ENCODE measurements at regions of chr6 and their contacts with region 1.

Region 1: GRCh38 chr6:32244946-32245398 is 21.1 kb upstream of the NOTCH4 start:
- DNase-seq: peak; percentile 89

Region 2: GRCh38 chr6:32255199-32256153 is 10.5 kb after region 1 on chr6:
- intact Hi-C with region 1: loop called (anchors 1 kb)
- DNase-seq: peak; percentile 80

Region 3: DNA sequence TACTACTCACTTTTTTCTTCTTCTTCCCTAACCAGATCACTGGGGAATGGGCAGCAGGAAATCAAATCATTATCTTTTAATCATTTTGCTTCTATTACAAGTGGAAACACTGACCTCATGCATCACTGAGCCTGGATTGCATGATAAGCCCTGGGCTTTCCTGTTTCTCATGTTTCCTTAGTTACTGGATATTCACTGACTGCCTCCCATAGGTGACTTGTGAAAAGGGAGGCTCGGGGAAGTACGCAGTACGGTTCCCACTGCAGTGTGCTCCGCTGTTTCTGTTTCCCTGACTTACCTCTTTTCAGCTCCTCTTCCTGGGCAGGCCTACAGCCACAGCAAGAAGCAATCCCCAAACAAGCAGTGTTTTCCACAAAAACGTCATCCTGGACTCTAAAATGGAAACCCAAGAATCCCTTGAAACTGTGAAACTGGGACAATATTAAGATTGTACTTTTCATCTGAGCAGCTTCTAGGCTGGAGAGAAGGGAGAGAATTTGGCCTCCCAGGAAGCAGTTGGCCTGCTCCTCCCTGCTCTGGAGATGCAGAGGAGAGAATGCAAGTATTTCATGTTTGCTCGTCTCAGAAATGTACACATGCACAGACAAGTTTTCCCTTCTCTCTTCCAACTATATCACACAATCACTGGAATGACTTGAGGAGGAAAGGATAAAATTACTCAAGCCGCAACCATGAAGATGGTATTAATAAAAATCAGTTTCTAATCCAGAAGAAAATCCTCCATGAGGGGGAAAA is 148.9 kb after region 1 on chr6:
- intact Hi-C with region 1: loop called (anchors 5 kb)
- DNase-seq: no peak

Region 4: GRCh38 chr6:32796848-32797776 is 552.1 kb after region 1 on chr6:
- intact Hi-C with region 1: loop called (anchors 10 kb)
- DNase-seq: peak; percentile 83

Region 5: GRCh38 chr6:33711140-33712129 is 1466.5 kb after region 1 on chr6 and contains the start of gene UQCC2:
- intact Hi-C with region 1: no loop called
- DNase-seq: peak; percentile 99
- total RNA-seq, gene UQCC2: 209 TPM